ENCODE measurements at regions of chr22 and their contacts with region 1.

Region 1: DNA sequence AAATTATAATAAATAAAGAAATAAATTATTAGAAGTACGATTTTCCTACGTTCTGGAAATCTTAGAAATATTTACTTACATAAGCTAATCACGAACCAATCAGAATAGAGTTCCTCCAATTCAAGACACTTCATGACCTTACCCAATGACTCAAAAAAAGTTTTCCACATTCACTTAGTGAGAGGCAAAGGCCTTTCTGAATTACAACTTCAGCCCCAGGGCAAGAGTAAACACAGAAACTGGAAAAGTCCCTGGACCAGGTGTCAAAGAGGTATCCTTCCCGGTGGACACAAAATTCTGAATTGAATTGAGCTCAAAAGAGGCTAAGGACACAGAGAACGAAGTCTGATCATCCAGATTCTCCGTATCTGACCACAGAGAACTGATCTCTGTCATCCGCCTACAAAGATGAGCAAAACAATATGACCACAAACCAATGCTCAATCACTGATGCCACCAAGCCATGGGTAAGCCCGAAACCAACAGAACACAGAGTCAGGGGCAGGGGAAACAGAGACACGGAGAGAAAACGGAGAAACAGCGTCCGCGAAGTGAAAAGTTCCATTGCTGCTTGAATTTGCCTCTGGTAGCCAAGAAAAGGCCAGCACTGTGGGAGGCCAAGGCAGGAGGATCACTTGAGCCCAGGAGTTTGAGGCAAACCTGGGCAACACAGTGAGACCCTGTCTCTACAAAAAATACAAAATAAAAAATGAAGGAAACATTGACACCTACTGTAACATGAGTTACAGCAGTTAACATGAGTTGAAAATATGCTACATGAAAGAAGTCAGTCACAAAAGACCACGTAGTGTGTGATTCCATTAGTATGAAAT is 6.8 kb downstream of the BID start:
- DNase-seq: peak; percentile 52
- H3K4me3 Mint-ChIP-seq: peak overlapping the region; percentile 2
- H3K27ac Mint-ChIP-seq: peak overlapping the region; percentile 43
- H3K4me1 Mint-ChIP-seq: peaks cover 19% of the 10 kb centered on the region
- H3K27me3 Mint-ChIP-seq: peaks cover 51% of the 10 kb centered on the region

Region 2: DNA sequence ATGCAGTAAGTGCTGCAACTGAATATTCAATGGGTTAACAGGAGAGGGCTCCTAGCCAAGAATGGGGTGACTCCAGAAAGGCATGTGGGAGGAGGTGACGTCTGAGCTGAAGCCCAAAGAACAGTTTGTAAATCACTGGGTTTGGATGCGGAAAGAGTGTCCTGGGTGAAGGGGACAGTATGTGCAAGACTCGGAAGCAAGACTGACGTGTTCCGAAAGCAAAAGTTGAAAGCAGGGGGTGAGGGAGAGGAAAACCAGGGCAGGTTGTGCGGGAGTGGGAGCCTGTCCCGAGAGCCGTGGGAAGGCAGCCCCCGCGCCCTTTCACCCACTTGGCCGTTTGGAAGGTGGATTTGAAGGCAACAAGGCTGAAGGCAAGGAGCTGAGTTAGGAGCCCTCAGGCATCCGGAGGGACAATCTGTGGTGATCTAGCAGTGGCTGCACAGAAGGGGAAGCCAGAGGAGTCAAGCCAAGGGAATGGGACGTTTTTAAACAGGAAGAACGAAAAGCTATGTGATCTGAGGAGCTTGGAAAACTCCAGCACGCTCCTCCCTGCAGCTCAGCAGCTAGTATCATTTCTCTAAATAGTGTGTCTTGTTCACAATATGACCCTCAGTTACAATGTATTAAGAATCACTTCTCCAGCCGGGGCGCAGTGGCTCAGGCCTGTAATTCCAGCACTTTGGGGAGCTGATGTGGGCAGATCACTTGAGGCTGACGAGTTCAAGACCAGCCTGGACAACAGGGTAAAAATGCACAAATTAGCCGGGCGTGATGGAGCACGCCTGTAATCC is 196.4 kb before region 1 on chr22:
- intact Hi-C with region 1: no loop called
- DNase-seq: no peak
- H3K4me3 Mint-ChIP-seq: no peak overlapping the region
- H3K27ac Mint-ChIP-seq: no peak overlapping the region
- H3K4me1 Mint-ChIP-seq: no peaks in the 10 kb centered on the region
- H3K27me3 Mint-ChIP-seq: no peaks in the 10 kb centered on the region

Region 3: GRCh38 chr22:17706018-17706900 is 61.2 kb before region 1 on chr22:
- intact Hi-C with region 1: loop called (anchors 2 kb)
- DNase-seq: peak; percentile 21
- H3K4me3 Mint-ChIP-seq: peak overlapping the region; percentile 61
- H3K27ac Mint-ChIP-seq: peak overlapping the region; percentile 89
- H3K4me1 Mint-ChIP-seq: peaks cover 17% of the 10 kb centered on the region
- H3K27me3 Mint-ChIP-seq: no peaks in the 10 kb centered on the region

Region 4: DNA sequence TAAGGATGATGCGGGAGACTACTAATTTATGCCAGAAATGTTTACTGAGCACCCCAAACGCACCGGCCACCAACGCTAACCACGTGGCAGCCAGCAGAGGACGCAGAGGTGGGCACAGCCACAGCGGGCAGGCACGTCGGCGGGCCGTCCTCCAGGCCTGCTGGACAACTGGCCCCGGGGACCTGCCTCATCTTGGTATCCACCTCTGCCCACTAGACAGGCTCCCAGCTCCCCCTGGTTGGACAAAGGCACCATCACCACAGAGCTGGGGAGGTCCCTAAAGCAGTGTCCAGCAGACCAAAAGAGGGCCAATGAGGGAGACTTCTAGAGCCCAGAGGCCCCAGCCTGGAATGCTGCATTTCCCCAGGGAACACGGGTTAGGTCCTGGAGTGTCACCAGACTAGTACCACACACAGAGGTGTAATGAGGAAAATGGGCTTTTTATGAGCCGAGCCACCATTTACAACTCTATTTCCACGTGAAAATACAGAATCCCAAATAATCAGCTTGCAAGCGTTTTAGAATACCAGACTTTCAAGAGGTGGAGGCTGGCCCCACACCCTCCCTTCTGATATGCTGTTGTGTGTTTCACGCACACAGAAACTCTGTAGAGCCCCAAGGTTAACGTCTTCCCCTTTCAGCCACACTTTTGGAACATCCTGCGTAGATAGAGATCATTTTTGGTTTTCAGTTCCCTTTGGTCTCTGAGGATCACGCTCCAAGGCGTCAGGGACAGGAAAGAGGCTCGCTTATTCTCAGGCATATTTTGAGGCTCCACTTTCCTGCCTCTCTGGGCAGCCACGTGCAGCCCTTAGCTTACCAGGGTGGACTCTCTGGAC is 30.5 kb after region 1 on chr22:
- intact Hi-C with region 1: loop called (anchors 2 kb)
- DNase-seq: no peak
- H3K4me3 Mint-ChIP-seq: no peak overlapping the region
- H3K27ac Mint-ChIP-seq: no peak overlapping the region
- H3K4me1 Mint-ChIP-seq: peaks cover 3% of the 10 kb centered on the region
- H3K27me3 Mint-ChIP-seq: no peaks in the 10 kb centered on the region

Measured in activated T-helper 2 cell treated with anti-CD3 and anti-CD28 coated beads, Interferon-gamma antibody, Interleukin-2, Interleukin-4, amounts not matched to agents 10 μg/mL and 5 μg/mL and 100 μg/mL, durations not matched to agents 14 hours and 24 hours and 36 hours (primary cell).